H1 (cell line): ENCODE measurements at regions of chr17 and their contacts with region 1.

Region 1: GRCh38 chr17:1186923-1187771 is 7.4 kb upstream of the ABR start:
- DNase-seq: peak in 1 of 2 experiments; percentile 90
- H3K4me3 ChIP-seq: peak overlapping the region in 1 of 4 experiments; percentile 23; a peak in 1 of 8 replicates
- H3K27ac ChIP-seq: no peak overlapping the region
- H3K4me1 ChIP-seq: peaks cover 0 to 9% (median 4%) of the 10 kb centered on the region in 4 experiments; a peak in 5 of 7 replicates
- H3K27me3 ChIP-seq: peaks cover 0 to under 1% (median under 1%) of the 10 kb centered on the region in 4 experiments; a peak in 4 of 7 replicates
- CTCF ChIP-seq: peak; percentile 89 to 98 (median 98)
- EP300 ChIP-seq: no peak
- POLR2A ChIP-seq: no peak
- RAD21 ChIP-seq: peak; percentile 74 to 82

Region 2: DNA sequence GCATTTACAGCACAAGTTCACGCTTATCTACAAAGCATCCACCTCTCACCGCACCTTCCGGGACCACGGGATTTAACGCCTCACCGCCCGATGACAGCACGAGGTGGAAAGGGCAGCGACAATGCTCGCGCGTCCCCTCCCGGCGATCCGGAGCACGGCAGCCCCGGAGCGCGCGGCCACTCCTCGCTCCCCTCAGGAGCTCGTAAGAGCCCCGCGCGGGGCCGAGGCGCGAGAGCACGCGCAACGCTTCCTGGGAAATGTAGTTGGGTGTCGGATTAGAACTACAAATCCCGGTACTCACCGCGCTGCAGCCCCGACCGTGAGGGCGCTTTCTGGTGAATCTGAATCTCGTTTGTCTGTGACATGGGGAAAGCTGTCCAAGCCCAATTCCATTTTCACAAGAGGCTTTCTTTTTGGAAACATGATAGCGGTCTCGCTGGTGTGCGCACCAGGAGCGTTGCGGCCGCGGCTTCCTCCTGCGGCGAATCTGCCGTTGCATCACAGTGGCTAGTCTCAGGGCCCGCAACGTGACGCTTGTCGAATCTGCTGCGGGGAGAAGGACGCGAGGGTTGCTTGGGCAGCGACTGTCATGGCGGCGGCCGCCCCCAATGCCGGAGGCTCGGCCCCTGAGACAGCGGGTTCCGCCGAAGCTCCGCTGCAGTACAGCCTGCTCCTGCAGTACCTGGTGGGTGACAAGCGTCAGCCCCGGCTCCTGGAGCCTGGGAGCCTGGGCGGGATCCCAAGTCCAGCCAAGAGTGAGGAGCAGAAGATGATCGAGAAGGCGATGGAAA is 190.4 kb before region 1 on chr17 and contains the start of gene TIMM22:
- CTCF ChIA-PET with region 1: no interaction called
- POLR2A ChIA-PET with region 1: no interaction called
- DNase-seq: peak; percentile 94 to 97
- H3K4me3 ChIP-seq: peak within 1 kb of the TSS; percentile 86 to 99 (median 94)
- H3K27ac ChIP-seq: peak within 1 kb of the TSS; percentile 92
- H3K4me1 ChIP-seq: peaks cover 0 to 5% (median 0%) of the 10 kb centered on the region in 4 experiments; a peak in 2 of 7 replicates
- H3K27me3 ChIP-seq: no peaks in the 10 kb centered on the region; a peak in 1 of 7 replicates
- CTCF ChIP-seq: peak; percentile 82 to 93 (median 88)
- EP300 ChIP-seq: peak; percentile 38 to 99; a peak in 2 of 3 replicates
- POLR2A ChIP-seq: peak; percentile 79 to 93
- RAD21 ChIP-seq: peak; percentile 91 to 93
- total RNA-seq, gene TIMM22: 17.2 and 17.4 TPM in 2 replicates

Region 3: GRCh38 chr17:1147661-1148060 is 39.5 kb before region 1 on chr17:
- CTCF ChIA-PET with region 1: interaction called, 15 read pairs
- POLR2A ChIA-PET with region 1: interaction called, 4 read pairs
- DNase-seq: peak; percentile 60 to 87
- H3K4me3 ChIP-seq: no peak overlapping the region
- H3K27ac ChIP-seq: no peak overlapping the region
- H3K4me1 ChIP-seq: peaks cover 0 to 4% (median 1%) of the 10 kb centered on the region in 4 experiments; a peak in 2 of 7 replicates
- H3K27me3 ChIP-seq: no peaks in the 10 kb centered on the region
- CTCF ChIP-seq: peak; percentile 68 to 86 (median 72)
- EP300 ChIP-seq: no peak
- POLR2A ChIP-seq: no peak
- RAD21 ChIP-seq: peak; percentile 76 to 81

Region 4: GRCh38 chr17:1164935-1165556 is 22.1 kb before region 1 on chr17:
- CTCF ChIA-PET with region 1: interaction called, 15 read pairs
- POLR2A ChIA-PET with region 1: no interaction called
- DNase-seq: no peak
- H3K4me3 ChIP-seq: no peak overlapping the region
- H3K27ac ChIP-seq: no peak overlapping the region
- H3K4me1 ChIP-seq: peaks cover 0 to 6% (median 0%) of the 10 kb centered on the region in 4 experiments; a peak in 1 of 7 replicates
- H3K27me3 ChIP-seq: no peaks in the 10 kb centered on the region
- CTCF ChIP-seq: no peak
- EP300 ChIP-seq: no peak
- POLR2A ChIP-seq: no peak
- RAD21 ChIP-seq: no peak

Region 5: DNA sequence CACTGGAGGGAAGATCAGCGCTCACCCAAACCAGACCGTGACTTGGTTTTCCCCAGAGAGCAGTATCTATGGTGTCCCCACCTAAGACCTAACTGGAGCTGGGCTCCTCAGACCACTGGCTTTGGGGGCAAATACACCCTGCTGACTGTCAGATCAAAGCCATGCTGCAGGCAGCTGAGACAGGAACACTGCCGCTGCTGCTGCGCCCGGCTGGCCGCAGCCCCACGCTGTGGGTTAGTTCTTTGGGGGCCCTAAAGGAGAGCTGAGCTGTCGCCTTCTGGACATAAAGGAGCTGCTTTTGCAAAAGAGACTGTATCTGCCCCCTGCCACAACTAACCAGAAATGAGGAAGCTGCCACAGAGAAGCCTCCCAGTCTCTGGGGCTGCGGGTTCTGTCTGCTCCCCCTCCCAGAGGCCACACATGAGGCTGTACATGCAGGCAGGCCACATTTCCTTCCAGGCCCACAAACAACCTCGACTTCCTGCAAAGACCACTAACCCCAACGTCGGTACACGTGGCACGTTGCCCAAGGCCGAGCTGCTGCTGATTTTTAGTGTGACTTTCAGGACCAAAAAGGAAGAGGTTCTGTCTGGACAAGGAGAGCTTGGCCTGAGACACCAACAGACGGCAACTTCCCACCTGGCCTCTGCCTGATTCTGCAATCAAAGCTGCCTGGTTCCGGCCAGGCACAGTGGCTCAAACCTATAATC is 10.8 kb after region 1 on chr17:
- CTCF ChIA-PET with region 1: interaction called, 61 read pairs
- POLR2A ChIA-PET with region 1: interaction called, 7 read pairs
- DNase-seq: no peak
- H3K4me3 ChIP-seq: no peak overlapping the region
- H3K27ac ChIP-seq: no peak overlapping the region
- H3K4me1 ChIP-seq: no peaks in the 10 kb centered on the region
- H3K27me3 ChIP-seq: peaks cover 0 to 3% (median 0%) of the 10 kb centered on the region in 4 experiments; a peak in 1 of 7 replicates
- CTCF ChIP-seq: no peak
- EP300 ChIP-seq: no peak
- POLR2A ChIP-seq: no peak
- RAD21 ChIP-seq: no peak